Caco-2 (cell line): ENCODE measurements at regions of chr16 and their contacts with region 1.

Region 1: DNA sequence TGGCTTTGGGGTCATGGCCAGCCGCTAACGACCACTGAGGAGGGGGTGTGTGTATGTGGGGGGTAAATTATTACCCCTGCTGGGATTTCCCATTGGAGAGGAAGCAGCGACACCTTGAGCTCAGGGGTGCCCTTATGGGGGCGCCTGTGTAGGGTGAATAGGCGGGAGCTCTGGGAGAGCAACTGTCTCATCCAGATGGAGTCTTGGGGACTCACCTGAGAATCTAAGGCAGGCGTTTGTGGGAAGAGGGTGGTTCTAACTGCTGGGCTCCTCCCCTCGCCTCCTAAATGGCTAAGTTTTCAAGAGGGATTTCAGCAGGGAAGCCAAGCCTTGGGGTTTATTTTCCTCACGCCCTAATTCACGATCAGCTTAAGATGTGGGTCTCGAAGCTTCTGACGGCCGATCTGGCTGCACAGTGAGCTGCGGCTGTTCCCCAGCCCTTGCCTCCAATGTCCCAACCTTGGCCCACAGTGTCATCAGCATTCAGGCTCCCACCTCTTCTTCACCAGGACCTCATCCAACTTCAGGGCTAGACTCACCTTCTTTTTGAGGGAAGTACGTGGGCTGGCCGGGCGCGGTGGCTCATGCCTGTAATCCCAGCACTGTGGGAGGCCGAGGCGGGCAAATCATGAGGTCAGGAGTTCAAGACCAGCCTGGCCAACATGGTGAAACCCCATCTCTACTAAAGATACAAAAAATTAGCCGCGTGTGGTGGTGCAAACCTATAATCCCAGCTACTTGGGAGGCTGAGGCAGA is 136.9 kb upstream of the EEF2KMT start:
- DNase-seq: no peak
- H3K4me3 ChIP-seq: no peak overlapping the region
- H3K4me3 Mint-ChIP-seq: no peak overlapping the region
- H3K27ac Mint-ChIP-seq: no peak overlapping the region
- H3K4me1 ChIP-seq: no peaks in the 10 kb centered on the region
- H3K4me1 Mint-ChIP-seq: no peaks in the 10 kb centered on the region
- H3K27me3 ChIP-seq: no peaks in the 10 kb centered on the region
- H3K27me3 Mint-ChIP-seq: peaks cover 25% of the 10 kb centered on the region
- CTCF ChIP-seq: no peak

Region 2: DNA sequence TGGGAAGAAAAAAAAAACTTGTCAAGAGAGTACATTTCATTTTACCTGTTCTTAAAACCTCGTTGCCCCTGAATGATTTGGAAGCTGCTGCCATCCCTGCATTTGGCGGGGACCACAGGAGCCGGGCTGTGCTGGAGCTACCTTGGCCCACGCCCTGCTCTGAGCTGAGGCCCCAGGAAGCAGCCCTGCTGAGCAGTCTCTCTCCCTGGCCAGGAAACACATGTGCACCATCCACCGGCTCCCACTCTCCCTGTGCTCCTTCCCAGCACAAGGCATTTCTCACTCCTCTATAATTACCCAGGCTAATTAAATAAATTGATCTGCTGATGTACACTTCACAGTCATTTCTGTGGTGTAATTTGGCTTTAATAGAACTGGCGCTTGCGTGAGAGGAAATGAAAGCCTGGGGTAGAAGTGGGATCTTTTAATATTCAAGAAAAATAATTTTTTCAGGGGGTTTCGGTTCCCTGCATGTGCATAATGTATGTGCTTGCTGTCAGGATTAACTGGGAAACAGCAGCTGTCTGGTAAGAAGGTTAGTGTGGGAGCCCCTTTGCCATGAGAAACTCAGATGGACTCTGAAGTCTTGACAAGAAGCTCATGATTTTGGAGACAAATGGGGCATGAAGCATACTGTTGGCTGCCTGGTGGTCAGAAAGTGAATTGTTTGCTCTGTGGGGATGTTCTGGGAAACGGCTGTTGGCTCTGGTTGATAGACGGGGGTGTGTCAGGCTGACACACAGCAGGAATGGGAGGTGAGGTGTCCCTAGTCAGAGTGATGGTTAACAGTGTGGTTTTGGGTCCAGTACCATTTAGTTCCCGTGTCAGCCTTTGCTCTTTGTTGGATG is 115.4 kb after region 1 on chr16:
- CTCF ChIA-PET with region 1: no interaction called
- POLR2A ChIA-PET with region 1: no interaction called
- intact Hi-C with region 1: no loop called
- DNase-seq: no peak
- H3K4me3 ChIP-seq: no peak overlapping the region
- H3K4me3 Mint-ChIP-seq: no peak overlapping the region
- H3K27ac Mint-ChIP-seq: no peak overlapping the region
- H3K4me1 ChIP-seq: no peaks in the 10 kb centered on the region
- H3K4me1 Mint-ChIP-seq: no peaks in the 10 kb centered on the region
- H3K27me3 ChIP-seq: no peaks in the 10 kb centered on the region
- H3K27me3 Mint-ChIP-seq: peaks cover 25% of the 10 kb centered on the region
- CTCF ChIP-seq: no peak

Region 3: GRCh38 chr16:5615868-5616642 is 381.6 kb after region 1 on chr16:
- CTCF ChIA-PET with region 1: no interaction called
- POLR2A ChIA-PET with region 1: no interaction called
- intact Hi-C with region 1: loop called (anchors 10 kb)
- DNase-seq: peak; percentile 55 to 60
- H3K4me3 ChIP-seq: no peak overlapping the region
- H3K4me3 Mint-ChIP-seq: no peak overlapping the region
- H3K27ac Mint-ChIP-seq: no peak overlapping the region
- H3K4me1 ChIP-seq: no peaks in the 10 kb centered on the region
- H3K4me1 Mint-ChIP-seq: no peaks in the 10 kb centered on the region
- H3K27me3 ChIP-seq: no peaks in the 10 kb centered on the region
- H3K27me3 Mint-ChIP-seq: peaks cover 11% of the 10 kb centered on the region
- CTCF ChIP-seq: peak; percentile 65 to 68